Gastrocnemius medialis (tissue), 4 donors: ENCODE measurements at regions of chr5 and their contacts with region 1.

Region 1: GRCh38 chr5:52657247-52657645 is 130.5 kb upstream of the ITGA1 start:
- DNase-seq: no peak
- ATAC-seq: no peak
- H3K4me3 ChIP-seq: no peak overlapping the region
- H3K27ac ChIP-seq: no peak overlapping the region
- H3K4me1 ChIP-seq: no peaks in the 10 kb centered on the region
- H3K27me3 ChIP-seq: no peaks in the 10 kb centered on the region
- CTCF ChIP-seq: peak in 4 of 5 experiments; percentile 32 to 62 (median 42)
- POLR2A ChIP-seq: no peak

Region 2: GRCh38 chr5:50969151-50970031 is 1687.9 kb before region 1 on chr5:
- in situ Hi-C with region 1: loop called in 2 of 4 experiments (anchors 10 to 25 kb)
- intact Hi-C with region 1: no loop called
- DNase-seq: no peak
- ATAC-seq: no peak
- H3K4me3 ChIP-seq: peak overlapping the region; percentile 48 to 70 (median 56)
- H3K27ac ChIP-seq: no peak overlapping the region
- H3K4me1 ChIP-seq: peaks cover 20 to 22% of the 10 kb centered on the region in 2 donors
- H3K27me3 ChIP-seq: peaks cover 56 to 71% (median 69%) of the 10 kb centered on the region in 3 donors
- CTCF ChIP-seq: no peak
- POLR2A ChIP-seq: no peak

Region 3: GRCh38 chr5:52554297-52554696 is 102.9 kb before region 1 on chr5:
- in situ Hi-C with region 1: no loop called
- intact Hi-C with region 1: no loop called
- DNase-seq: no peak
- ATAC-seq: no peak
- H3K4me3 ChIP-seq: no peak overlapping the region
- H3K27ac ChIP-seq: no peak overlapping the region
- H3K4me1 ChIP-seq: no peaks in the 10 kb centered on the region
- H3K27me3 ChIP-seq: no peaks in the 10 kb centered on the region
- CTCF ChIP-seq: no peak
- POLR2A ChIP-seq: no peak

Region 4: DNA sequence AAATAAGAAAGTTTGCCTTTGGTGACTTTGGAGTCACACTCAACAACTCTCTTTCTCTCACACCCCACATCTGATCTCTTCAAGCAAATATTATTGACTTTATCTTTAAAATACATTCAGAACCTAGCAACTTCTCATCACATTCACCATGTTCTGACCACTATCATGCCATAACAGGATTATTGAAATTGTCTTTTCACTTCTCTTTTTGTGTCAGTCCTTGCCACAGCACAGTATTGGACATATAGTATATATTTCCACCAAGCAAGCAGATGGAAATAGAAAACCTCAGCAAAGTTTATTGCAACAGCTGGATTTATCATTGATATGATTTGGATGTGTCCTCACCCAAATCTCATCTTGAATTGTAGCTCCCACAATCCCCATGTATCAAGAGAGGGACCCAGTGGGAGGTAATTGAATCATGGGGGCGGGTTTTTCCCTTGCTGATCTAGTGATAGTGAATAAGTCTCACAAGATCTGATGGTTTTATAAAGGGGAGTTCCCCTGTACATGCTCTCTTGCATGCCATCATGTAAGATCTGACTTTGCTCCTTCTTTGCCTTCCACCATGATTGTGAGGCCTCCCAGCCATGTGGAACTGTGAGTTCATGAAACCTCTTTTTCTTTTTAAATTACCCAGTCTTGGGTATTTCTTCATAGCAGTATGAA is 103.6 kb after region 1 on chr5:
- in situ Hi-C with region 1: no loop called
- intact Hi-C with region 1: no loop called
- DNase-seq: no peak
- ATAC-seq: no peak
- H3K4me3 ChIP-seq: no peak overlapping the region
- H3K27ac ChIP-seq: no peak overlapping the region
- H3K4me1 ChIP-seq: no peaks in the 10 kb centered on the region
- H3K27me3 ChIP-seq: no peaks in the 10 kb centered on the region
- CTCF ChIP-seq: no peak
- POLR2A ChIP-seq: no peak